GM10248 (cell line): ENCODE measurements at regions of chr9 and their contacts with region 1.

Region 1: DNA sequence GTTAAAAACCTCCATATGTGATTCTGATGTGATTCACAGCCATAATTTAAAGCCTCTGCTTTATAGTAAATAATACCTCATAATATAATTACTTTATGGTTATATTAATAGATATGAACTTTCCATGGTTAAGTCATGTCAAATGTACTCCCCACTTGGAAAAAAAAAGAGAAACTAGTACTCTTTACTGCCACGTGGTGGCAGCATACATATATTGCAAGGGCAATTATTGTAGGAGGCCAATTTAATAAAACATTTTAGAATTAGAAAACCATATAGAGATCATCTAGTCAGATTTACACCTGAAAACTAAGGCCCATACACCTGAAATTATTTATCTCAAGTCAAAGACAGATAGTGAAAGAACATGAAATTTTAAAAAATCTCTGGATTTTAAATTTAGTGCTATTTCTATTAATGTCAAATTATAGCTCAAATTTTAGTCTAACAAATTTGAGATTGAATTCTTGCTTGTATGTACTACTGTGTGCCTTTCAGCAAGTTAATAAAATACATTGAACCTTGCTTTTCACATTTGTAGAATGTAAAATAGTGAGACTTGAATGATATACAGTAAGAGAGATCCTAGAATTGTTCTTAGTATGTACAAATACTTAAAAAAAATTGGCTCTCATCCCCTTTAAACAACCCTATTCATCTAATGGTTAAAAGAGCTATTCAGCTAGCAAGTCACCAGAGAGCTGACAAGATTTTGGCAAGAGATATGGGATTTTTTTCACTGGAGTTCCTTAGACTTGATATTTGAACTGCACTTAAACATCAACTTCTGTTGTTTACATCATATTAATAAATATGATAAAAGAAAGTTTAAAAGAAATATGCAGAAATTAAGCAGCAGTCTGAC is 603.8 kb downstream of the TLE4 start:
- DNase-seq: no peak
- CTCF ChIP-seq: peak; percentile 63

Region 2: DNA sequence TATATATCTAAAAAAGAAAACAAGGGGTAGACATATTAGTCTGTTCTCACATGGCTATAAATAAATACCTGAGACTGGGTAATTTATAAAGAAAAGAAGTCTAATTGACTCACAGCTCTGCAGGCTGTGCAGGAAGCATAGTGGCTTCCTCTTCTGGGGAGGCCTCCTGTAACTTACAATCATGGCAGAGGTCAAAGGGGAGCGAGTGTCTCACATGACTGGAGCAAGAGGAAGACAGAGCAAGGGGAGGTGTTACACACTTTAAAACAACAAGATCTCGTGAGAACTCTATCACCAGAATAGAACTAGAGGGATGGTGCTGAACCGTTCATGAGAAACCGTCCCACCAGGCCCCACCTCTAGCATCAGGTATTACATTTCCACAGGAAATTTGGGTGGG is 13.1 kb after region 1 on chr9:
- CTCF ChIA-PET with region 1: interaction called, 15 read pairs
- POLR2A ChIA-PET with region 1: no interaction called
- DNase-seq: no peak
- CTCF ChIP-seq: no peak

Region 3: GRCh38 chr9:80231201-80231950 is 55.9 kb after region 1 on chr9:
- CTCF ChIA-PET with region 1: no interaction called
- POLR2A ChIA-PET with region 1: no interaction called
- DNase-seq: no peak
- CTCF ChIP-seq: no peak